Heart right ventricle (tissue), 16 donors: ENCODE measurements at regions of chr1 and their contacts with region 1.

Region 1: GRCh38 chr1:170388489-170388888 is 143.5 kb upstream of the GORAB start:
- DNase-seq: no peak
- ATAC-seq: peak in 3 of 8 donors; percentile 18 to 90 (median 24)
- H3K4me3 ChIP-seq: no peak overlapping the region
- H3K27ac ChIP-seq: no peak overlapping the region
- H3K4me1 ChIP-seq: peaks cover 0 to 4% (median 0%) of the 10 kb centered on the region in 9 donors
- H3K27me3 ChIP-seq: no peaks in the 10 kb centered on the region
- CTCF ChIP-seq: no peak

Region 2: GRCh38 chr1:170424346-170424745 is 35.9 kb after region 1 on chr1:
- intact Hi-C with region 1: loop called in 1 of 10 experiments (anchors 1 kb)
- DNase-seq: no peak
- ATAC-seq: no peak
- H3K4me3 ChIP-seq: no peak overlapping the region
- H3K27ac ChIP-seq: no peak overlapping the region
- H3K4me1 ChIP-seq: no peaks in the 10 kb centered on the region
- H3K27me3 ChIP-seq: no peaks in the 10 kb centered on the region
- CTCF ChIP-seq: no peak